H1 (cell line): ENCODE measurements at regions of chr14 and their contacts with region 1.

Region 1: DNA sequence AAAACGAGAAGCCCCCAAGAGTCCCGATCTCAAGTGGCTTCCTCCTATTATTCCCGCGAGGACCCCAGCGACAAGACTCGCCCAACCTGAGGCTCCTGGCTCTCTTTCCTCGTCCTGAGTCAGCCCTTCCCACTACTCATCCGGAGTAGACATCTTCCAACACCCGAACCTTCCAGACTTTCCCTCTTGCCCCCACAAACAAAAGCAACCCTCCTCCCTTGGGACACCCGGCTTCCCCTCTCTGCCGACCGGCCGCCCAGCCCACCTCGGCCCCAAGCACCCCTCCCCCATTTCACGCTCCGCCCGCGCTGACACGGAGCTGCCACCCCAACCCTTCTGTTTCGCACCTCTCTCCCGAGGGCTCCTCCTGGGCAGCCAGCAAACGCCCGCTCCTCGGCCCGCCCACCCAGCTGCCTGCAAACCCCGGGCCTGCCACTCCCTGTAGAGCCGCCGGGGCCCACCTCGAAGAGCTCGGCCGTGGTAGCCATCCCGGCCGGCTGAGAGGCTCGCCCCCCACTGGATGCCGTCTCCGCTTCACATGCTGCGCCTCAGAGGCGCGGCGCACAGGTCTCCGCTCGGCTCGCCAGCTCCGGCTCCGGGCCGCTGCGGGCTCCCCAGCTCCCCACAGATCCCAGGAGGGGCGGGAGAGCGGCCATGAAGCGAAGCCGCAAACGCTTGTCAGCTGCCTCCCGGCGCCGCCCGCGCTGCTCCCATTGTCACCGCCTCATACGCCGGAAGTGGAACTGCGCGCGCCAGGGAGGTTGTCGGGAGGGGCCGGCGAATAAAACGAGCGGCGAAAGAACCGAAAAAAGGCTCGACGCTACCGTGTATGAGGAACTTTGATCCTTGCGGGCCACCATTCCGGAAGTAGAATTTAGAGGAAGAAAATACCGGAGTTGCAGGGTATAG is at the starts of genes AP5M1 and EXOC5:
- DNase-seq: peak; percentile 64 to 87
- H3K4me3 ChIP-seq: peak within 1 kb of the TSS; percentile 85 to 98 (median 95)
- H3K27ac ChIP-seq: peak within 1 kb of the TSS; percentile 81
- H3K4me1 ChIP-seq: peaks cover 0 to 3% (median 1%) of the 10 kb centered on the region in 4 experiments; a peak in 3 of 7 replicates
- H3K27me3 ChIP-seq: no peaks in the 10 kb centered on the region
- CTCF ChIP-seq: no peak
- EP300 ChIP-seq: 0 out of 3 replicates have a peak, but pooled peaks of 1 of the 2 experiments have one; percentile 24
- POLR2A ChIP-seq: no peak
- RAD21 ChIP-seq: no peak
- total RNA-seq, gene AP5M1: 50.9 and 51.9 TPM in 2 replicates
- total RNA-seq, gene EXOC5: 79.2 and 86.7 TPM in 2 replicates

Region 2: GRCh38 chr14:57189070-57189469 is 79.3 kb before region 1 on chr14:
- CTCF ChIA-PET with region 1: no interaction called
- POLR2A ChIA-PET with region 1: no interaction called
- DNase-seq: no peak
- H3K4me3 ChIP-seq: no peak overlapping the region
- H3K27ac ChIP-seq: no peak overlapping the region
- H3K4me1 ChIP-seq: no peaks in the 10 kb centered on the region; a peak in 1 of 7 replicates
- H3K27me3 ChIP-seq: peaks cover 0 to 1% (median 0%) of the 10 kb centered on the region in 4 experiments; a peak in 1 of 7 replicates
- CTCF ChIP-seq: peak in 2 of 3 experiments; percentile 13 to 41; a peak in 2 of 4 replicates
- EP300 ChIP-seq: no peak
- POLR2A ChIP-seq: no peak
- RAD21 ChIP-seq: peak; percentile 71

Region 3: GRCh38 chr14:57254884-57255283 is 13.5 kb before region 1 on chr14:
- CTCF ChIA-PET with region 1: no interaction called
- POLR2A ChIA-PET with region 1: interaction called, 10 read pairs
- DNase-seq: no peak
- H3K4me3 ChIP-seq: no peak overlapping the region
- H3K27ac ChIP-seq: no peak overlapping the region
- H3K4me1 ChIP-seq: peaks cover 0 to 4% (median 1%) of the 10 kb centered on the region in 4 experiments; a peak in 2 of 7 replicates
- H3K27me3 ChIP-seq: no peaks in the 10 kb centered on the region
- CTCF ChIP-seq: no peak
- EP300 ChIP-seq: no peak
- POLR2A ChIP-seq: no peak
- RAD21 ChIP-seq: no peak

Region 4: GRCh38 chr14:57390028-57390805 is 121.8 kb after region 1 on chr14 and contains the start of gene NAA30:
- CTCF ChIA-PET with region 1: no interaction called
- POLR2A ChIA-PET with region 1: interaction called, 19 read pairs
- DNase-seq: peak; percentile 79 to 90
- H3K4me3 ChIP-seq: peak within 1 kb of the TSS; percentile 76 to 83 (median 82)
- H3K27ac ChIP-seq: peak within 1 kb of the TSS; percentile 20; the same call in 1 of the 2 replicates
- H3K4me1 ChIP-seq: peaks cover 3 to 8% (median 6%) of the 10 kb centered on the region in 4 experiments; a peak in 4 of 7 replicates
- H3K27me3 ChIP-seq: no peaks in the 10 kb centered on the region
- CTCF ChIP-seq: peak in 1 of 3 experiments; percentile 6; a peak in 1 of 4 replicates
- EP300 ChIP-seq: no peak
- POLR2A ChIP-seq: peak; percentile 40 to 63
- RAD21 ChIP-seq: no peak
- total RNA-seq, gene NAA30: 20.3 and 21.9 TPM in 2 replicates